OCI-LY7 (cell line): ENCODE measurements at regions of chr2 and their contacts with region 1.

Region 1: GRCh38 chr2:60550178-60550983 is 3.1 kb downstream of the BCL11A start:
- DNase-seq: peak; percentile 91
- H3K4me3 ChIP-seq: peak overlapping the region; percentile 93
- H3K27ac ChIP-seq: peak overlapping the region; percentile 90
- H3K4me1 ChIP-seq: peaks cover 31% of the 10 kb centered on the region
- CTCF ChIP-seq: peak; percentile 89

Region 2: DNA sequence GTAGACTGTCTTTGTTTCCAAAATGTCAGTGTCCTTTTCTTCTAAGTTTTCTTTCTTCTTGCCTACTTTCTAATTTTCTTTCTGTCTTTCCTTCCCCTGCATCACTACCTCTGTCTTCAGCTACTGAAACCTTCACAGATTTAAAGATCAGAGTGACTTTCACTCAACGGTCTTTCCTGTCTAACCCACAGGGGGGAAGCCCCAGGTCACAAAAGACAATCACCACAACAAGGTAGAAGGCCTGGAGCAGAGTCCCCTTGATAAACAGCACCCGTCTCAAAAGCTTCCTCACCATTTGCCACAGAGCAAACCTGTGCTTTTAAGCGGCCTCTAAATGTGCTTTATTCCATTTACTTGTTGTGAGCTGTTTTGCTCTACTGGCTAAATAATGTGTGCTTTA is 662.4 kb before region 1 on chr2:
- CTCF ChIA-PET with region 1: no interaction called
- POLR2A ChIA-PET with region 1: interaction called, 6 read pairs
- intact Hi-C with region 1: loop called (anchors 2 kb)
- DNase-seq: peak; percentile 85
- H3K4me3 ChIP-seq: no peak overlapping the region
- H3K27ac ChIP-seq: peak overlapping the region; percentile 51
- H3K4me1 ChIP-seq: peaks cover 25% of the 10 kb centered on the region
- CTCF ChIP-seq: peak; percentile 59

Region 3: DNA sequence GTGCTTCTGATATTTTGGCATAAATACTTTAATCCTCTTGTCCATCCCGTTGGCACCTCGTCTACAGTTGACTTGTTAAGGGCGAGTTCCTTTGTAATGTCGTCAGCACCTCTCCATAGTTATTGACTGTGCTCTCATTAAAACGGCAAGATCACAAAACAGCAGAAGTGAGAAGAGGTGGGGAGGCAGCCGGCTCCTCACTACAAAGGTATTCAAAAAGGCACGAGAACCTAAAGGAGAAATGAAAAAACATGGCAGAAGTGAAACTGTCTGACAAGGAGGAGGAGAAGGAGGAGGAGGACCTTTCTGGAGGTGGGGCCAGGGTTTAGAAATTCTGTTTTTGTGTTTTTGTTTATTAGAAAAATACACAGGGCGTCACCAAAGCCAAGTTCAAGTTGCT is 232.5 kb before region 1 on chr2:
- CTCF ChIA-PET with region 1: interaction called, 8 read pairs
- POLR2A ChIA-PET with region 1: interaction called, 9 read pairs
- intact Hi-C with region 1: loop called (anchors 2 kb)
- DNase-seq: peak; percentile 92
- H3K4me3 ChIP-seq: peak overlapping the region; percentile 47
- H3K27ac ChIP-seq: peak overlapping the region; percentile 92
- H3K4me1 ChIP-seq: peaks cover 86% of the 10 kb centered on the region
- CTCF ChIP-seq: no peak

Region 4: GRCh38 chr2:60439219-60439974 is 111.0 kb before region 1 on chr2:
- CTCF ChIA-PET with region 1: interaction called, 5 read pairs
- POLR2A ChIA-PET with region 1: interaction called, 11 read pairs
- intact Hi-C with region 1: loop called (anchors 2 kb)
- DNase-seq: peak; percentile 96
- H3K4me3 ChIP-seq: peak overlapping the region; percentile 41
- H3K27ac ChIP-seq: peak overlapping the region; percentile 65
- H3K4me1 ChIP-seq: peaks cover 66% of the 10 kb centered on the region
- CTCF ChIP-seq: peak; percentile 77

Region 5: DNA sequence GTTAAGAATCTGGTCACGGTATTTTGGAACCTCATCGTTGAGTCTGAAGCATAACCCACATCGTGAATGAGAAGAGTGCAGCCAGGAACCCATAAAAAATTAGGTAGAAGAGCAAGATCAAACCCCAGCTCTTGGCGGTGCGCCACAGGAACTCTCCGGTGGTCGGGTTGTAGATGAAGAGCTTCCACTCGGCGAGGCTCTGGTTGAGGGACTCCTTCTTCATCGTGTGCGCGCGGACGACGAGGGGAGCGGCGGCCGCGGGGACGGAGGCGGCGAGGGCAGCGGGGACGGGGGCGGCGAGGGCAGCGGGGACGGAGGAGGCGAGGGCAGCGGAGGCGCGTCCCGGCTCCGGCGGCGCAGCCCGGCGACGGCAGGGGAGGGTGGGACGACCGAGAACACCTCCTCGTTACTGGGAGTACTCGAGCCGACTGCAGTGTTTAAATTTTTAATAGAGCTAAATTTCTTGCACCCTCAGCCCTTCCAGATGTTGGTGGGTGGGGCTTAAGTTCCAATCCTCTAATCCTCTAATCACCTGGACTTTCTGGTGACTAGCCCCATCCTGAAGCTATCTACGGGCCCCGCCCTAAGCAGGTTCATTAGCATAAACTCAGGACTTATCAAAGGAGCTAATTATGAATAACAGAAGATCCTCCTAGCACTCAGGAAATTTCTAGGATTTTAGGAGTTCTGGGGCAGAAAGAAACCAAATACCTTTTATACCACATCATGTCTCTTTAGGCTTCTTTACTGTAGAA is 185.3 kb after region 1 on chr2:
- CTCF ChIA-PET with region 1: no interaction called
- POLR2A ChIA-PET with region 1: no interaction called
- intact Hi-C with region 1: no loop called
- DNase-seq: no peak
- H3K4me3 ChIP-seq: no peak overlapping the region
- H3K27ac ChIP-seq: no peak overlapping the region
- H3K4me1 ChIP-seq: no peaks in the 10 kb centered on the region
- CTCF ChIP-seq: no peak

Region 6: DNA sequence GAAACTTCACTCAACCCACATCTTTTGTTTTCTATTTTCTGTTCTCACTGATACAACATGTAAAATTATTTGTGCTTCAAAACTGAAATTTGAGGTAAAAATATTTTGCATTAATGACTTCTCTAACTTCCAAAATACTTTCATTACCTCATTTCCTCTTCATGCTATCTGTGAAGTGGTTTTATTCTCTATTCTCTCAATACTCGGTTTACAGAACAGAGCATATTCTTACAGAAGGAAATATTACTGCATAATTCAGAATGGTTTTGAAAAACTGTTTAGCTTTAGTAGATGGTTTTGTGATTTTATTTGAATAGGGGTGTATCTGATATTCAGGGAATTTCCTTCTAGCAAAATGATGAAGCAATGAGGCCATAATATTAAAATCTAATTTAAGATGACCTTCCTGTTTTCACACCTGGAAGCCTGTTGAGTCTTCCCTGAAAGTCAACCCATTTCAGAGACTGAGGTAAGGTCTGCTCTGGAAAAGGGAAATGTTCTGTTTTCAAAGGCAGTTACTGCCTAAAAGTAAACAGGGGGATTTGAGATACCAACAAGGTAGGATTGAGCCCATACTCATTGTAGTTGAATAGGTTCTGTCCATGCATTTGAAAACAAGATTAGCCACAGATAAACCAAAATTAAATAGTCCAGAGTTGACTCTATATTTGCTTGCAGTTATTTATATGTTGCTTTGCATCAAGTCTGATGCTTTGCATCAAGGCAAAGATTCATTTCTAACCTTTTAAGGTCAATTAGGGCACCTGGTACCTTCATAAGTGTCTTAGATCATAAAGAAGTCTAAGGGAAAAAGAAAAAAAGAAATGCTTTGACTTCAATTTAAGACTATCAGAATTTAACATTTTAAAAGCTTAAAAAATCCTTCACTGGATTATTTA is 416.4 kb after region 1 on chr2:
- CTCF ChIA-PET with region 1: no interaction called
- POLR2A ChIA-PET with region 1: no interaction called
- intact Hi-C with region 1: loop called (anchors 5 kb)
- DNase-seq: peak; percentile 24
- H3K4me3 ChIP-seq: peak overlapping the region; percentile 43
- H3K27ac ChIP-seq: peak overlapping the region; percentile 69
- H3K4me1 ChIP-seq: peaks cover 71% of the 10 kb centered on the region
- CTCF ChIP-seq: no peak